ENCODE measurements at regions of chr1 and their contacts with region 1.

Region 1: GRCh38 chr1:147890177-147890790 is 12.3 kb upstream of the GJA8 start:
- DNase-seq: peak in 5 of 6 donors; percentile 26 to 82 (median 33)
- ATAC-seq: peak in 3 of 4 donors; percentile 79 to 90 (median 83)
- H3K4me3 ChIP-seq: no peak overlapping the region
- H3K27ac ChIP-seq: no peak overlapping the region
- H3K4me1 ChIP-seq: no peaks in the 10 kb centered on the region
- H3K27me3 ChIP-seq: no peaks in the 10 kb centered on the region
- CTCF ChIP-seq: peak in 1 of 4 donors; percentile 23

Region 2: GRCh38 chr1:147504801-147505311 is 385.4 kb before region 1 on chr1:
- intact Hi-C with region 1: loop called in 1 of 3 experiments (anchors 10 kb)
- DNase-seq: no peak
- ATAC-seq: peak in 3 of 4 donors; percentile 37 to 53 (median 51)
- H3K4me3 ChIP-seq: no peak overlapping the region
- H3K27ac ChIP-seq: no peak overlapping the region
- H3K4me1 ChIP-seq: no peaks in the 10 kb centered on the region
- H3K27me3 ChIP-seq: no peaks in the 10 kb centered on the region
- CTCF ChIP-seq: no peak

Region 3: GRCh38 chr1:147640553-147641165 is 249.6 kb before region 1 on chr1:
- intact Hi-C with region 1: loop called in 1 of 3 experiments (anchors 10 kb)
- DNase-seq: peak; percentile 53 to 84 (median 72)
- ATAC-seq: peak; percentile 92 to 98 (median 96)
- H3K4me3 ChIP-seq: no peak overlapping the region
- H3K27ac ChIP-seq: no peak overlapping the region
- H3K4me1 ChIP-seq: no peaks in the 10 kb centered on the region
- H3K27me3 ChIP-seq: no peaks in the 10 kb centered on the region
- CTCF ChIP-seq: peak; percentile 65 to 91 (median 82)

Region 4: DNA sequence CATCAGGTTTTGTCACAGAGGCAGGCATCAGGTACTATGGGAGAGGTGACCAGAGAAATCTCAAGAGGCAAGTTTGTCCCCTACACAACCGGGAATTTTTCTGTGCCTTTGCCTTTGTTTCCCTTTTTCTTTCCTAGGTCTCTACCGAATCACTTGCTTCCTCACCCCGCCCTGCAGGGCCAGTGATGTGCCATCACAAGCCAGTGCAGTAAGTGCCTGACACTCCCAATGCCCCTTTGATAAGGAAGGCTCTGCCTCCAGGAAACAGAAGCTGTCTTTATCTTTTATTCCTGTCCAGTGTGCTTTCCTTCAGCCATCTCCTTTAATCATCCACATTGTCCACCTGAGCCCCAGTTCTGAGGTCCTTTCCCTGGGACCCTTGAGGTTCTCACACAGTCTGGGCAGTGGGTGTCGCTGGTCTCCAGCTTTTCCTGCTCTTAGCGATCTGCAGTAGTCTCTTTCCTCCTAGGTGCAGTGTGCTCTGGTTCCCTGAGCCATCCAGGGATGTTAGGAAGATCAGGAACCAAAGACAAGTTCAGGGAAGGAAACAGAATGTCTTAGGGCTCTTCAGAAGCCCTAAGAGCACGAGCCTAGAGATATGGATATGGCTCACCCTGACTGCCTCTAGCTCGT is 166.5 kb before region 1 on chr1:
- intact Hi-C with region 1: loop called in 2 of 3 experiments (anchors 5 to 10 kb)
- DNase-seq: peak in 1 of 6 donors; percentile 11
- ATAC-seq: peak in 3 of 4 donors; percentile 78 to 93 (median 80)
- H3K4me3 ChIP-seq: no peak overlapping the region
- H3K27ac ChIP-seq: no peak overlapping the region
- H3K4me1 ChIP-seq: peaks cover 0 to 3% (median 0%) of the 10 kb centered on the region in 3 donors
- H3K27me3 ChIP-seq: no peaks in the 10 kb centered on the region
- CTCF ChIP-seq: peak in 1 of 4 donors; percentile 29

Measured in pancreas (tissue), 10 donors.